Activated CD8-positive, alpha-beta T cell treated with anti-CD3 and anti-CD28 coated beads for 36 hours (primary cell): ENCODE measurements at regions of chr17 and their contacts with region 1.

Region 1: DNA sequence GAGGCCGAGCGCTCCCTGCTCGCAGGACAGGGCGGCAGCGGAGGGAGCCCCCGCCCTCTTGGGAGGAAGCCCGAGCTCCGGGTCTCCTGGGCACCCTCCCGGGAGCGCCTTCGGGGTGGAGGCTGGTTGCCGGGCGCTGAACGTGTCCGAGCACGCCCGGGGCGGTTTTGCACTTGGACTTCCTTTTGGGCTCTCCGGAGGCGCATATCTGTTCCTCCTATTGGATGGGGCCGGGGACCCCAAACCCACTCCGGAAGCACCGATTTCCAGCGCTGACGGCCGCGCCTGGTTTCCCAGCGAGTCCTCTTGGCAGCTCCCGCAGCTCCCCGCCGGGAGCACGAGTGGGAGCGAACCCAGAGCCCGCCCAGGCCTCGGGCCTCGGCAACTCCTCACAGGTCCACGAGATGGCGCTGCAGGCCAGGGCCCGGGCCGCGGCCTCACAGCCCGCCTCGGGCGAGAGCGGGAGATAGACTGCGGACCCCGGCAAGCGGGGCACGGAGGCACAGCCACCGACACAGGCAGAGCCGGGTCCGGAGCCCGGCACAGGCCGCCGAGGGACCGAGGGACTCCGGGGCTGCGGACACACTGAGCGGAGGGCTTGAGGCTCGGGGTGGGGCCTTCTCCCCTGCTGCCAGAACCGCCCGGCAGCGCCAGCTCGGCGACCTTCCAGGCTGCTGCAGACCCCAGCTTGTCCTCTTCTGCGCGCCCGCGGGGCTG is 12.7 kb downstream of the TBX2 start:
- DNase-seq: peak; percentile 75
- ATAC-seq: peak; percentile 74
- H3K4me3 Mint-ChIP-seq: peak overlapping the region; percentile 61
- H3K27ac Mint-ChIP-seq: no peak overlapping the region
- H3K4me1 Mint-ChIP-seq: peaks cover 25% of the 10 kb centered on the region
- H3K27me3 Mint-ChIP-seq: peaks cover 34% of the 10 kb centered on the region
- CTCF ChIP-seq: peak; percentile 99

Region 2: DNA sequence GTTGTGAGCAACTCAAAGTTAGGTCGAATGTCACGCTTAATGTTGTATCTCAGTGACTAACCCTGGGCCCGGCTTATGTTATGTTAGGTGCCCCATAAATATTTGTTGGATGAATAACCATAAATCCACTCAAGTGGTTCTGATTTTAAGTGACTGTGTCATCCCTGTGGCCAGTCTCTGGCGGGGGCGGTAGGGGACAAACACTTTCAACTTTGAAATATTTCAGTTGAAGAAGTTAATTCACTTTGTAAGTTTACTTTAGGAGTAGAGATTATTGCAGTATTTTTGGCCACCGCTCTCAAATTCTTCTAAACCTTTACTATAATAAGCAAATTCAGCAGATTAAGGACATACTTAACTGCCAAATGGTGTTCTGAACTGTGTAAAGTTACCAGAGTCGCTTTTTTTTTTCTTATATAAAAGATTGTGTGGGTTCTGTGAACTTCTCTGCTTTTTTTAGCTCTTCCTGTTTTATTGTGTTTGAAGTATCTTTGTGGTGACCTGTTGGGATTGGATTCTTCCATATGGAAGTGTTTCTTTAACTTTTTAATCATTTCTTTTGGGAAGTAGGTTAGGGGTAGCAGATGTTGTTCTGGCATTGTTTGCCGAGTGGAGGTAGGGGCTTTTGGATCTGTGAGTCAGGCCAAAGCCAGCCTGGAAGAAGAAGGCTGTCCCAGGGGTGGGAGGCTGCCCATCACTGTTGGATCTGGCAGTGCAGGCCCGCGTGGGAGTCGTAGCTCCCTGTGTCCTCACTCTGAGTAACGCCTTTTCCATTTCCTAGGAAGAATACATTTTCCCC is 74.1 kb before region 1 on chr17:
- CTCF ChIA-PET with region 1: no interaction called
- POLR2A ChIA-PET with region 1: no interaction called
- intact Hi-C with region 1: no loop called
- DNase-seq: no peak
- ATAC-seq: no peak
- H3K4me3 Mint-ChIP-seq: no peak overlapping the region
- H3K27ac Mint-ChIP-seq: no peak overlapping the region
- H3K4me1 Mint-ChIP-seq: no peaks in the 10 kb centered on the region
- H3K27me3 Mint-ChIP-seq: no peaks in the 10 kb centered on the region
- CTCF ChIP-seq: no peak

Region 3: GRCh38 chr17:61399131-61400057 is 12.9 kb before region 1 on chr17 and contains the start of gene TBX2:
- CTCF ChIA-PET with region 1: interaction called, 16 read pairs
- POLR2A ChIA-PET with region 1: no interaction called
- intact Hi-C with region 1: no loop called
- DNase-seq: no peak
- ATAC-seq: no peak
- H3K4me3 Mint-ChIP-seq: peak within 1 kb of the TSS; percentile 32
- H3K27ac Mint-ChIP-seq: no peak within 1 kb of the TSS
- H3K4me1 Mint-ChIP-seq: peaks cover 31% of the 10 kb centered on the region
- H3K27me3 Mint-ChIP-seq: peaks cover 65% of the 10 kb centered on the region
- CTCF ChIP-seq: no peak
- total RNA-seq, gene TBX2: not detected

Region 4: DNA sequence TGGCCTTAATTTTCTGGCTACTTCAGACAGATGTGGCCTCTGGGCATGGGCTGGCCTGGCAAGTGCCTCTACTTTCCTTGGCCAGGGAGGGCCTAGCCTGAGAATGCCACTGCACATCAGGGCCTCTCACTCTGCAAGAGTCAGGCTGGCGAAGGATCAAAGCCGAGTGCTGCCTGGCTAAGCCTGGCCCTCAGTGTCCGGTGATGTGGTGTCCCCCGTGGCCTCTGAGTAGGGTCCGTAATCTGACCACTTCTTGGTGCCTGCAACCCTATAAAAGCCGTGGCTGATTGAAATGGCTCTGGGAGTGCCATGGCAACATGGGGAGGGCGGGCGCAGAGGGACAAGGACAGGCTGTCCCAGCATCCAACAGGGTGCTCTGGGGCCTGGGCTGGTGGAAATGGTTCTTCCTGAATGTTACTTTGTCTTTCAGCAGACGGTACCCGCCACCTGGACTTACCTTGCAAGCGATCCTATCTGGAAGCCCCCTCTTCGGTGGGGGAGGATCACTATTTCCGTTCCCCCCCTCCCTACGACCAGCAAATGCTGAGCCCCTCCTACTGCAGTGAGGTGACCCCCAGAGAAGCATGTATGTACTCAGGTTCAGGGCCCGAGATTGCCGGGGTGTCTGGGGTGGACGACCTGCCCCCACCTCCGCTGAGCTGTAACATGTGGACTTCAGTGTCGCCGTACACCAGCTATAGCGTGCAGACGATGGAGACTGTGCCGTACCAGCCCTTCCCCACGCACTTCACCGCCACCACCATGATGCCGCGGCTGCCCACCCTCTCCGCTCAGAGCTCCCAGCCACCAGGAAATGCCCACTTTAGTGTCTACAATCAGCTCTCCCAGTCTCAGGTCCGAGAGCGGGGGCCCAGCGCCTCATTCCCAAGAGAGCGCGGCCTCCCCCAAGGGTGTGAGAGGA is 70.4 kb after region 1 on chr17:
- CTCF ChIA-PET with region 1: interaction called, 14 read pairs
- POLR2A ChIA-PET with region 1: no interaction called
- intact Hi-C with region 1: no loop called
- DNase-seq: no peak
- ATAC-seq: no peak
- H3K4me3 Mint-ChIP-seq: no peak overlapping the region
- H3K27ac Mint-ChIP-seq: no peak overlapping the region
- H3K4me1 Mint-ChIP-seq: no peaks in the 10 kb centered on the region
- H3K27me3 Mint-ChIP-seq: no peaks in the 10 kb centered on the region
- CTCF ChIP-seq: no peak

Region 5: GRCh38 chr17:61545335-61545938 is 133.1 kb after region 1 on chr17:
- CTCF ChIA-PET with region 1: interaction called, 19 read pairs
- POLR2A ChIA-PET with region 1: no interaction called
- intact Hi-C with region 1: loop called (anchors 5 kb)
- DNase-seq: no peak
- ATAC-seq: no peak
- H3K4me3 Mint-ChIP-seq: no peak overlapping the region
- H3K27ac Mint-ChIP-seq: no peak overlapping the region
- H3K4me1 Mint-ChIP-seq: no peaks in the 10 kb centered on the region
- H3K27me3 Mint-ChIP-seq: peaks cover 21% of the 10 kb centered on the region
- CTCF ChIP-seq: no peak

Region 6: GRCh38 chr17:61551255-61551742 is 139.0 kb after region 1 on chr17:
- CTCF ChIA-PET with region 1: interaction called, 19 read pairs
- POLR2A ChIA-PET with region 1: no interaction called
- intact Hi-C with region 1: loop called (anchors 5 kb)
- DNase-seq: no peak
- ATAC-seq: peak; percentile 24
- H3K4me3 Mint-ChIP-seq: no peak overlapping the region
- H3K27ac Mint-ChIP-seq: no peak overlapping the region
- H3K4me1 Mint-ChIP-seq: no peaks in the 10 kb centered on the region
- H3K27me3 Mint-ChIP-seq: peaks cover 22% of the 10 kb centered on the region
- CTCF ChIP-seq: peak; percentile 68

Region 7: GRCh38 chr17:61837175-61838051 is 425.1 kb after region 1 on chr17:
- CTCF ChIA-PET with region 1: interaction called, 4 read pairs
- POLR2A ChIA-PET with region 1: no interaction called
- intact Hi-C with region 1: loop called (anchors 5 kb)
- DNase-seq: peak; percentile 71
- ATAC-seq: no peak
- H3K4me3 Mint-ChIP-seq: no peak overlapping the region
- H3K27ac Mint-ChIP-seq: no peak overlapping the region
- H3K4me1 Mint-ChIP-seq: no peaks in the 10 kb centered on the region
- H3K27me3 Mint-ChIP-seq: no peaks in the 10 kb centered on the region
- CTCF ChIP-seq: peak; percentile 77